ENCODE measurements at regions of chr20 and their contacts with region 1.

Region 1: DNA sequence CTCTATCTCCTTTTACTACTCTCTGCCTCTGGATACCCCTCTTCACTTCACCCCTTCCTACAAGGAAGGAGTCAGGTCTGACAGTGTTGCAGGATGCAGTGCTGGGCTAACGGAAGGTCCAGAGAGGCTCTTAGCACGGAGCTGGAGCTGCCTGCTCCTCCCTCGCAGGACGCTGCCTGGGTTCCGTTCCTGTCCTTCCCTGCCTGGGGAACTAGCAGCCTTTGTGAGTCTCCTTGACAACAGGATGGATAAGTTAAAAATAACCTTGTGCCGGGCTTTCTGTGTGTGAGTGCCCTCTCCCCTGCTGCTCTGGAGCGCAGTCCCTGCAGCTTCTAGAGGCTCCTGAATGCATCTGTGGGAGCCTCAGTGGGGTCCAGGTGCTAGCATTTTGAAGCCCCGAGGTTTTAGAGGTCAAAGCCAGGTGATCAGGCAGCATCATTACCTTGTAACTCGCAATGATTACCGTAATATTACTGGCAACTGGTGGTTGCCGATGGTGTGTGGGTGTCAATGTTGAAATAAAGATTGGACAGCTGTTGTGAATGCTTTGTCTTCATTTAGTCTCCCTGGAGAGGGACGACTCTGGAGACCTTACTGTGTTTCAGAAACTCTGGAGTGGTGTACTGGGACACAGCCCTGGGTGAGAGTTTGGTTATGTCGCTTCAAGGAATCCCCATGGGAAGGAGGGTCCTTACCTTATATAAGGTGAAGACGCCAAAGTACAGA is 44.4 kb downstream of the CDS2 start:
- DNase-seq: peak; percentile 67 to 82
- ATAC-seq: peak; percentile 72 to 87 (median 84)
- H3K4me3 ChIP-seq: peak overlapping the region in 4 of 10 donors; percentile 1 to 19 (median 9)
- H3K27ac ChIP-seq: peak overlapping the region; percentile 41 to 87 (median 74)
- H3K4me1 ChIP-seq: peaks cover 50 to 100% (median 96%) of the 10 kb centered on the region in 9 donors
- H3K27me3 ChIP-seq: no peaks in the 10 kb centered on the region
- CTCF ChIP-seq: no peak

Region 2: GRCh38 chr20:5126512-5127203 is 44.6 kb before region 1 on chr20 and contains the start of gene CDS2:
- intact Hi-C with region 1: loop called in 3 of 10 experiments (anchors 5 kb)
- DNase-seq: peak; percentile 100
- ATAC-seq: peak; percentile 97 to 99 (median 97)
- H3K4me3 ChIP-seq: peak within 1 kb of the TSS; percentile 83 to 98 (median 94)
- H3K27ac ChIP-seq: peak within 1 kb of the TSS; percentile 89 to 99 (median 98)
- H3K4me1 ChIP-seq: peaks cover 7 to 60% (median 48%) of the 10 kb centered on the region in 9 donors
- H3K27me3 ChIP-seq: no peaks in the 10 kb centered on the region
- CTCF ChIP-seq: peak; percentile 54 to 90 (median 71)
- total RNA-seq, gene CDS2: 67.5 to 100 (median 85.7) TPM

Region 3: DNA sequence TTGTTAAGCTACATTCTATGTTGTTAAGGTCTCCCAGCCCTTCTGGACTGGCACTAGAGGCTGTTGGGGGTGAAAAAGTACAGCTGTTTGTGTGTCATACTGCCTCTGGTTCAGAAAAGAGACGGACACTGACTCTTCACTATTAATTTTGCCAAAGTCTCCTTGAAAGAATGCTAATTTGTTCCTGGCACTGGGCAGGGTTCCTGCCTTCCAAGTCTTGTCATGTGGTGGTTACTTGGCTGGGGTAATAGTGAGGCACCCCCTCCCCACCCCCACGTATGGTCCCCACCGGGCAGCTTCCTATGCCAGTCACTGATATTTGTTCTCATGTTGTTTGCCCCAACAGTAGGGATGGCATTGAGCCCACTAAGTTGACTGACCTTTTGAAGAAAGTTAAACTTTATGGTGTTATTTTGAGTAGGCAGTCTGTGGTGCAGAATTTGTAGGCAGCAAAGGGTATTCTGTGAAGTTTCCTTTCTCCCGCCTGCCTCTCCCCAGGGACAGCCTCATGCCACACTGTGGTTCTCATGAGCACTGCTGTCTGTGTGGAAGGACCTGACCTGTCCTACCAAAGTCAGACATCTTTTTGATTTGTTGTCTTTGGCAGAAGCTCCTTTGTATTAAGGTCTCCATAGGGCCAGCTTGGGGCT is 35.7 kb before region 1 on chr20:
- intact Hi-C with region 1: loop called in 2 of 10 experiments (anchors 5 kb)
- DNase-seq: no peak
- ATAC-seq: peak; percentile 30 to 80 (median 60)
- H3K4me3 ChIP-seq: peak overlapping the region in 1 of 10 donors; percentile 10
- H3K27ac ChIP-seq: peak overlapping the region; percentile 27 to 99 (median 58)
- H3K4me1 ChIP-seq: peaks cover 2 to 86% (median 53%) of the 10 kb centered on the region in 9 donors
- H3K27me3 ChIP-seq: no peaks in the 10 kb centered on the region
- CTCF ChIP-seq: peak in 2 of 9 donors; percentile 14 to 26

Measured in heart right ventricle (tissue), 16 donors.